Prostate gland (tissue), 2 donors: ENCODE measurements at regions of chr10 and their contacts with region 1.

Region 1: DNA sequence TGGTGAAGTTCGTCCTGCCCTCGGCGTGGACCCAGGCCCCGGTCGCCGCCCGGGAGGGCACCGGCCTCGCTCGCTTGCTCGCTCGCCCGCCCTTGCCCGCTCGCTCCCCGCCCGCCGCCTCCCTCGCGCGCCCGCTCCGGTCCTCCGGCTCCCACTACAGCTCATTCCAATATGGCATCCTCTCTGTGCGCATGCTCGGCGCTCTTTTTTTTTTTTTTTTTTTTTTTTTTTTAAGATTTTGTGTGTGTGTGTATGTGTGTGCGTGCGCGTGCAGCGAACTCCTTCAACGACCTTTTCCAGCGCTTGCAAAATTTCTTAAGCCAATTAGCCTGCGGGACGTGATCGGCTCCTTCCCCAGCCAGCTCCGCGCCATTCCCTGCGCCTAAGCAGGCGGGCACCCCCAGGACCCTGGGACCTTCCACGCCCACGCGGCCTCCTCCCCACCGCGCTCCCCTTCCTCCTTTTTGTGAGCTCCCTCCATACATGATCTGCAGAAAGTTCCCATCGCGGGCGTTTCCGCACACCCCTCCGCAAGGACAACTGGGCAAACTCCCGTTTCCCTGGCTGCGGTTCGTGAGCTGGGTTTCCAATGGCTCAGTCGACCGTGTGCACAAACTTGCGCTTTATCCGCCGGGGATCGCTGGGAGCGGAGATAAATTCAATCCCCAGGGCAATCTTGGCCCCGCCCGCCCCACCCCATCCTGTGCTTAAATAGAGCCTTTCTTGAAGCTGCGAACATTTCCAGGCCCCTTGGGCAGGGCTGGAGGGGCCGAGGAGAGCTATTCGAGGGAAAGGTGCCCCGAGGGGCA is at the start of gene SFMBT2:
- DNase-seq: peak; percentile 64
- H3K4me3 ChIP-seq: peak within 1 kb of the TSS; percentile 64 to 77
- H3K27ac ChIP-seq: peak within 1 kb of the TSS; percentile 75 to 90
- H3K4me1 ChIP-seq: no peaks in the 10 kb centered on the region
- H3K27me3 ChIP-seq: no peaks in the 10 kb centered on the region
- CTCF ChIP-seq: peak in 2 of 4 experiments; percentile 5 to 12
- POLR2A ChIP-seq: peak; percentile 33
- total RNA-seq, gene SFMBT2: 12.2 to 18.5 TPM

Region 2: GRCh38 chr10:6678211-6678803 is 732.8 kb before region 1 on chr10:
- intact Hi-C with region 1: loop called (anchors 10 kb)
- DNase-seq: peak; percentile 14
- H3K4me3 ChIP-seq: no peak overlapping the region
- H3K27ac ChIP-seq: no peak overlapping the region
- H3K4me1 ChIP-seq: no peaks in the 10 kb centered on the region
- H3K27me3 ChIP-seq: no peaks in the 10 kb centered on the region
- CTCF ChIP-seq: peak in 2 of 4 experiments; percentile 46 to 58
- POLR2A ChIP-seq: no peak

Region 3: GRCh38 chr10:6786579-6787031 is 624.5 kb before region 1 on chr10:
- intact Hi-C with region 1: loop called (anchors 5 kb)
- DNase-seq: no peak
- H3K4me3 ChIP-seq: no peak overlapping the region
- H3K27ac ChIP-seq: no peak overlapping the region
- H3K4me1 ChIP-seq: no peaks in the 10 kb centered on the region
- H3K27me3 ChIP-seq: no peaks in the 10 kb centered on the region
- CTCF ChIP-seq: peak in 2 of 4 experiments; percentile 23 to 50
- POLR2A ChIP-seq: no peak

Region 4: GRCh38 chr10:6920072-6921019 is 490.7 kb before region 1 on chr10:
- intact Hi-C with region 1: loop called (anchors 5 kb)
- DNase-seq: peak; percentile 67
- H3K4me3 ChIP-seq: peak overlapping the region in 1 of 2 donors; percentile 7
- H3K27ac ChIP-seq: no peak overlapping the region
- H3K4me1 ChIP-seq: no peaks in the 10 kb centered on the region
- H3K27me3 ChIP-seq: no peaks in the 10 kb centered on the region
- CTCF ChIP-seq: peak in 3 of 4 experiments; percentile 51 to 68 (median 61)
- POLR2A ChIP-seq: no peak

Region 5: DNA sequence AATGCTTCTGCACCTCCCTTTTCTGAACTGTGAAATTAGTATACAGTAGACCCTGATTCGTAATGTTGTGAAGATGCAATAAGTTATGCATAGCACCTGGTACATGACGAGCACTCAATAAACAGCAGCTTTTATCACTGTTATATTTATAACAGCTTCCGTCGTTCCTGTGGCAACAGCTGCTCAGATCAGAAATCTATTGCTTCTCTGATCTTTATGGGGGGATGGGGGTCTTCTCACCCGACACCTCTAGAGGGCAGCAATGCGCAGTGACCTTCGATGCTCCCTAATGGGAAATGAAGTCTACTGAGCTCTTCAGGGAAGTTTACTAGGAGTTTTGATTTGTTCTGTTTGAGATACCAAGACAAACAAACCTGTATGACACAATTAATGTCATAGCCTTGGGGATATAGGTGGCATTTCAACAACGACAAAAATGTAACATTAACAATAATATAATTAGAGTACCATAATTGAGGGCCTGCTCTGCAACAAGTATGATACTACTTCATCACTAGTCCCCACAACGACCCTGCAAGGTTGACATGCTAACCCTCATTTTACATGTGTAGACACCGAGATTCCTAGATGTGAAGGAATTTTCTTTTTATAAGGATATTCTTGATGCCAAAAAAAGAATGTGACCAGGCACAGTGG is 289.8 kb before region 1 on chr10:
- intact Hi-C with region 1: loop called (anchors 5 kb)
- DNase-seq: peak; percentile 32
- H3K4me3 ChIP-seq: no peak overlapping the region
- H3K27ac ChIP-seq: no peak overlapping the region
- H3K4me1 ChIP-seq: no peaks in the 10 kb centered on the region
- H3K27me3 ChIP-seq: no peaks in the 10 kb centered on the region
- CTCF ChIP-seq: peak in 3 of 4 experiments; percentile 54 to 60 (median 54)
- POLR2A ChIP-seq: no peak

Region 6: DNA sequence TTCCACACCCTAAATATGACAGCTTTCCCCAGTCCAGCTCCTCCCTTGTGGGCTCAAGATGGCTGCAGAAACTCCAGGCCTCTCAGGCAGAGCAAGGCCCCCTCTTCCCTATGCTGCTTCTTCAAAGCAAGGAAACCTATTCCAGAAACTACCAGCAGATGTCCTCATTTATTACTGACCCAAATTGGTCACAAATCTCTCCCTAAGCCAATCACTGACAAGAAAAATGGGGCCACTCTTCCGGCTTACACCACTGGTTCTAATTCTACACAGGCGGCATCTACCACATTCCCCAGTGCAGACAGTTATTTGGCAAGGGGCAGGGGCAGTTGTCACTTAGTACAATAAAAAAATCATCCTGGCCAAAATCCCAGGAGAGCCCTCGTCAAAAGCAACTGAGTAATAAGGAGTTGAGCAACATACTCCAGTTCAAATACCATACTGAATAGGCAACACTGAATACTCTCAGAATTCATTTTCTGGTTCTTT is 150.6 kb before region 1 on chr10:
- intact Hi-C with region 1: loop called (anchors 1 kb)
- DNase-seq: peak; percentile 90
- H3K4me3 ChIP-seq: no peak overlapping the region
- H3K27ac ChIP-seq: peak overlapping the region; percentile 40 to 56
- H3K4me1 ChIP-seq: peaks cover 6% of the 10 kb centered on the region
- H3K27me3 ChIP-seq: no peaks in the 10 kb centered on the region
- CTCF ChIP-seq: peak; percentile 40 to 81 (median 73)
- POLR2A ChIP-seq: no peak

Region 7: GRCh38 chr10:7301006-7301793 is 109.9 kb before region 1 on chr10:
- intact Hi-C with region 1: loop called (anchors 2 kb)
- DNase-seq: no peak
- H3K4me3 ChIP-seq: no peak overlapping the region
- H3K27ac ChIP-seq: no peak overlapping the region
- H3K4me1 ChIP-seq: no peaks in the 10 kb centered on the region
- H3K27me3 ChIP-seq: no peaks in the 10 kb centered on the region
- CTCF ChIP-seq: no peak
- POLR2A ChIP-seq: no peak